ENCODE measurements at regions of chr11 and their contacts with region 1.

Region 1: DNA sequence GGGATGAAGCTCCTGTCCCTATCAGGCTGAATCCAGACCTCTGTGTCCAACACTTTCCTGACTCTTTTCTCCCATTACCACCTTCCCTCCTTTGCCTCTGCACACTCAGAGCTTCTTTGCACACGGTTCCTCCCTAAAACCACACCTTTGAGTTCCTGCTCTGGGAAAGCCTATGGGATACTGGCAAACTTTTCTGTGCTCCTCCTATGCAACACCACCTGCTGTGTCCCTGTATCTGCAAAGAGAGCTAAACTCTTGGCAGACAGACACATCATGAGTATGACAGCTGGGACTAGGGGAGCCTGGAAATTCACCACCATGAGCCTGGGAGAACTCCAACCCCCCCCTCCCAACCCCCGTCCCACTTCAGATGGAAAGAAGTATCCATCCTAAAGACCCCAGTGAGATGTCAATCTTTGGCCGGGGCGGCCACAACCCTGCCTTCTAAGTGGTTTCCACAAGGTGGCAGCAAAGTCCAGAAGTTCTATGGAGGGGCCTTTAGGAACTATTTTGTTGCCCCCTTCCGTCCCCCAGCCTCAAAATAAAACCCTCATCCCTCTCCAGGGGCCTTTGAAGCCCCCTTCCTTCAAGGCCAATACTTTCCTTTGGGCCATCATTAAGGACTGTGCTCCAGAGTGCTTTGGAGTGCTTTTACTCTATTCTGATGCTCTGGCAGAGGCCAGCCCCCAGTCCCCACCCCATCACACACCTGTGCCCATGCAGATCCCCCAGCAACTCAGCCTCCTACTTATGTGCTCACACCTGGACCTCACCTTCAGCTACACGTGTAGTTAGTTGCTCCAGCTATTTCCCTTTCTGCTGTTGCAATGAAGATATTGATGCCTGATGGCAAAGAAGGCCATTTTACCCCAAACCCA is 19.4 kb downstream of the HTR3A start:
- DNase-seq: peak; percentile 48
- ATAC-seq: no peak
- H3K4me3 Mint-ChIP-seq: no peak overlapping the region
- H3K27ac Mint-ChIP-seq: no peak overlapping the region
- H3K4me1 Mint-ChIP-seq: peaks cover 11% of the 10 kb centered on the region
- H3K27me3 Mint-ChIP-seq: peaks cover 14% of the 10 kb centered on the region

Region 2: DNA sequence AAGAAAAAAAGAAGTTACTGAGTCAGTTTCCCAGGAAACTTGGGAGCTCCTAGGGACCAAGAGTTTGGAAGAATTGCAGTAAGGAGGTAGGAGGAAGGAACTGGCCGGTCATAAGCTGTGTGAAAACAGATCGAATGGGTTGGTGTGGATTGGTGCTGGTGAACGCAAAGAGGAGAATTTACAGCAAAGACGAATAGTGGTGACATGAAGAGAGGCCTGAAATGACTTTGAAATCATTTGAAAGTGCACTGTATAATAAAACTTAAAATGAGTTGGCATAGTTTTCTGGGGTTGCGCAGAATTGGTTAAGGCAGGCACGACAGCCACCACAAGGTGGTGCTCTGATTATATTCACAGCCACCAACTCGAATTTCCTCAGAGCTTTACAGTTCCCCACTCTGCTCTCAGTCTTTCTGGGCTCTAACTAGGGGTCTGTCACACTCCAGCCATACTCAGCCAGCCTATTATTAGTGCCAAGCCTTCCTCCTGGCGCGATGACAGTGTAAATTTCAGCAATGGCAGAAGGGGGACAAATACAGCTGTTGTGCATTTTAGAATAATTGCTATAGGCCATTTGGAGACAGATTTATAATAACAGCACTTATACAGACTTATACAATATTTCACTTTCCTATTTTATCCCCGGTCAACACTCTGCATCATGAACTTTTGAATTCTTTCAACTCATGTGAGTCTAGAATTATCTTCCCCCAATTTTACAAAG is 98.0 kb before region 1 on chr11:
- CTCF ChIA-PET with region 1: interaction called, 15 read pairs
- POLR2A ChIA-PET with region 1: no interaction called
- DNase-seq: peak; percentile 55
- ATAC-seq: peak; percentile 73
- H3K4me3 Mint-ChIP-seq: no peak overlapping the region
- H3K27ac Mint-ChIP-seq: no peak overlapping the region
- H3K4me1 Mint-ChIP-seq: peaks cover 2% of the 10 kb centered on the region
- H3K27me3 Mint-ChIP-seq: peaks cover 3% of the 10 kb centered on the region